Activated CD8-positive, alpha-beta T cell treated with anti-CD3 and anti-CD28 coated beads for 36 hours (primary cell): ENCODE measurements at regions of chr1 and their contacts with region 1.

Region 1: GRCh38 chr1:184813528-184814089 is 59.0 kb upstream of the EDEM3 start:
- DNase-seq: no peak
- ATAC-seq: no peak
- H3K4me3 Mint-ChIP-seq: no peak overlapping the region
- H3K27ac Mint-ChIP-seq: no peak overlapping the region
- H3K4me1 Mint-ChIP-seq: no peaks in the 10 kb centered on the region
- H3K27me3 Mint-ChIP-seq: no peaks in the 10 kb centered on the region
- CTCF ChIP-seq: no peak

Region 2: DNA sequence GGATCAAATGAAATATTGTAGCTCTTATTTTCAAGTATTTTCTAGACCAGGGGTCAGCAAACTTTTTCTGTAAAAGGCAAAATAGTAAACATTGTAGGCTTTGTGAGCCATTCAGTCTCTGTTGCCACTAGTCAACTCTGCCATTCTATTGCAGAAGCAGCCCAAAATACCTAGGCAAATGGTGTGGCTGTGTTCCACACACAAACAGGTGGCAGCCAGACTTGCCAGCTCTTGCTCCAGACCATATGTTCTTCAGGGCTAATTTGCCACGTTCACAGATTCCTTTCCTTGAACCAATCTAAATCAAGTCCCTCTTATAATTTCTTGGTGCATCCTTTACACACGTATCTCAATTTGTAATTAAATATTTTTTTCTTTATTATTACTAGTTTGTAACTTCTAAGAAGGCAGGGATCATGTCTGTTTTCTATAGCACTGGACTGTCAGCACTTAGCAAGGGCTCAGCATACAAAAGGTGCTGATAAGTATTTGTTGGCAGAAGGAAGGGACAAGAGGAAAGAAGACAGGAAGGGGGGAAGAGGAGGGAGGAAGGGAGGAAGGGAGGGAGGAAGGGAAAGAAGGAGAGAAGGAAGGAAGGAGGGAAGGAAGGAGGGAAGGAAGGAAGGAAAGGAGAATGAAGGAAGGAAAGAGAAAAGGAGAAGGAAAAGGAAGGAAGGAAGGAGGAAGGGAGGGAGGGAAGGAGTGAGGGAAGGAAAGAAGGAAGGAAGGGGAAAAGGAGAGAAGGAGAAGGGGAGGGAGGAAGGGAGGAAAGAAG is 47.6 kb after region 1 on chr1:
- CTCF ChIA-PET with region 1: no interaction called
- POLR2A ChIA-PET with region 1: no interaction called
- intact Hi-C with region 1: no loop called
- DNase-seq: no peak
- ATAC-seq: no peak
- H3K4me3 Mint-ChIP-seq: no peak overlapping the region
- H3K27ac Mint-ChIP-seq: no peak overlapping the region
- H3K4me1 Mint-ChIP-seq: peaks cover 14% of the 10 kb centered on the region
- H3K27me3 Mint-ChIP-seq: peaks cover 4% of the 10 kb centered on the region
- CTCF ChIP-seq: no peak

Region 3: DNA sequence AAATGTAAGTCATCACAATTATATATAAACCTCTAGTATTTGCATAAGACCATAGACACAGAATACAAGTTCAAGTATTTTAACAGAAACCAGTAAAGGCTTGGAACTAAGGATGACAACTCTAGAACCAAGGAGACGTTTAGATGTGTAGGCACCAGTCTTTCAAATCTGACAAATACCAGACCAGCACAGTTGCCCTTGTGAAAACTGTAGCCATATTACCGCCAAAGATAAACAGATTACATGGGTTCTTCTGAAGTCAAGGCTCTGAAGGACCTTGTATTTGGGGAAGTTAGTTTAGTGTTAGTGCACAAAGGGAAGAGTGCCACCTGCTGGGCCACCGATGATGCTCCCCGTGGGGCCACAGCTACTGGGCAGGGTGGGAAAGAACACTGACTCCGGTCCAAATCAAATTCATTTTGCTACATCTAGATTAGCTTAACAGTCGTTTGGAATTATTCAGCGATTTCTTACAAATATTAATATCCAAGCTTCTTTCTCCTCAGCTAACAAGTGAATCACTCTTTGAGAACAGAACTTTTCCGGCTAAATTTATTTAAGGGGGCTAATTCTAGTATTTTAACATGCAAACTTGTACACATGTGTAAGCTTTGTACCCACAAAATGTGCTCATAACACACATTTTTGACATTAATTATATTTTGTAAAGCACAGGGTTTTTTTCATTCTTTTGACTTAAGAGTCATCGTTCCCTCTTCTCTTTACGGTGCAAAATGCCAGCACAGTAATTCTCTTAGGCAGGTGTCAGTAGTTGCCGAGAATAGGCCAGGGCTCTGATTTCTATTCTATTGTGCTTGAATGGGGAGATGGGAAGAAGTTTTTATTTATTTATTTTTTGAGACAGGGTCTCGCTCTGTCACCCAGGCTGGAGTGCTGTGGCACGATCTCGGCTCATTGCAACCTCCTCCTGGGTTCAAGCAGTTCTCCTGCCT is 168.7 kb after region 1 on chr1:
- CTCF ChIA-PET with region 1: interaction called, 232 read pairs
- POLR2A ChIA-PET with region 1: no interaction called
- intact Hi-C with region 1: no loop called
- DNase-seq: peak; percentile 85
- ATAC-seq: peak; percentile 99
- H3K4me3 Mint-ChIP-seq: no peak overlapping the region
- H3K27ac Mint-ChIP-seq: no peak overlapping the region
- H3K4me1 Mint-ChIP-seq: peaks cover 5% of the 10 kb centered on the region
- H3K27me3 Mint-ChIP-seq: peaks cover 14% of the 10 kb centered on the region
- CTCF ChIP-seq: peak; percentile 93